Dorsolateral prefrontal cortex (tissue), 120 donors: ENCODE measurements at regions of chr20 and their contacts with region 1.

Region 1: GRCh38 chr20:33731693-33732165 is at the start of gene ZNF341:
- DNase-seq: peak; percentile 79 to 92 (median 87)
- H3K4me3 ChIP-seq: peak within 1 kb of the TSS; percentile 46 to 80 (median 68)
- H3K27ac ChIP-seq: peak within 1 kb of the TSS; percentile 92 to 99 (median 98)
- H3K27me3 ChIP-seq: no peaks in the 10 kb centered on the region
- CTCF ChIP-seq: peak; percentile 55 to 95 (median 81)
- total RNA-seq, gene ZNF341: 4.5 to 12.8 (median 7.9) TPM

Region 2: GRCh38 chr20:33443512-33444239 is 288.1 kb before region 1 on chr20 and contains the start of gene SNTA1:
- intact Hi-C with region 1: no loop called
- DNase-seq: peak; percentile 55 to 84 (median 78)
- H3K4me3 ChIP-seq: peak within 1 kb of the TSS; percentile 54 to 87 (median 75)
- H3K27ac ChIP-seq: peak within 1 kb of the TSS in 55 of 59 donors; percentile 3 to 92 (median 74)
- H3K27me3 ChIP-seq: no peaks in the 10 kb centered on the region
- CTCF ChIP-seq: peak in 2 of 56 donors; percentile 9 to 19
- total RNA-seq, gene SNTA1: 35.4 to 180 (median 77.4) TPM

Region 3: GRCh38 chr20:33666293-33667244 is 65.2 kb before region 1 on chr20 and contains the start of gene ACTL10:
- intact Hi-C with region 1: loop called (anchors 2 to 5 kb)
- DNase-seq: peak; percentile 66 to 95 (median 92)
- H3K4me3 ChIP-seq: peak within 1 kb of the TSS; percentile 45 to 81 (median 65)
- H3K27ac ChIP-seq: peak within 1 kb of the TSS; percentile 60 to 98 (median 89)
- H3K27me3 ChIP-seq: no peaks in the 10 kb centered on the region
- CTCF ChIP-seq: peak in 49 of 56 donors; percentile 1 to 68 (median 43)
- total RNA-seq, gene ACTL10: 0.20 to 1.3 (median 0.39) TPM in 83 of 120 experiments, not detected in the others

Region 4: DNA sequence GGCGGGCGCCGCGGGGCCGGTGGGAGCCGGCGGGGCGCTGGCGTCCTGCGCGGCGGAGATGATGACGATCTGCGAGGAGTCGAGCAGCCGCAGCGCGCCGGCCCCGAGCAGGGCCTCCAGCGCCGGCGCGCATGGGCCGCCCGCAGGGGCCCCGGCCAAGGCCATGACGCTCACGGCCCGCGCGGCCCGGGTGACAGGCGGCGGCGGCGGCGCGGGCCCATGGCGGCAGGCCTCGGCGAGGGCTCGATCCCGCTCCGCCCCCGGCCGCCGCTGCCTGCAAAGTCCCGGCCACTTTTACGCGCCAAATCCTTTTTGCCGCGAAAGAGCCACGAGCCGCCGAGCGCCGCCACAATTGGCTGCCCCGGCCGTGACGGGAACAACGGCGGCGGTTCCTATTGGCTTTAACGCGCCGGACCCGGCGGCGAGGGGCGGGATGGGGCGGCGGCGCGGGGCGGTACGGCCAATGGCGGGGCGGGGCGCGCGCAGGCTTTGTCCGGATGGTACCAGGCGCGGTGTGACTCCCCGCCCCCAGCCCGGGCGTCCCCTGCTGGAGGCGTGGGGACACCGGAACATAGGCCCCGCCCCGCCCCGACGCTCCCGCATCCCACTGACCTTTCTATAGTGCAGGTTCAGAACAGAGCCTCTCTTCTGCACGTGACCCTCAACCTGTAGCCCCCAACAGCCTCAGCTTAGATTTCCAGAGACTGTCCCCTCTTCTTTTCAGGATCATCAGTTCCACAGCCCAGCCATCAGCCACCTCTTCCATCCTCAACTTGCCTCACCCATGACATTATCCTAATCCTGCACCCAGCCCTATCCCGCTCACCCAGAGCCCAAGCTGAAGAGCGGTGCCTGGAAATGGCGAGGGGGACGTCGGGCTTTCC is 45.4 kb before region 1 on chr20 and contains the start of gene E2F1:
- intact Hi-C with region 1: loop called in 1 of 2 experiments (anchors 2 kb)
- DNase-seq: peak; percentile 91 to 97 (median 95)
- H3K4me3 ChIP-seq: peak within 1 kb of the TSS; percentile 26 to 68 (median 53)
- H3K27ac ChIP-seq: peak within 1 kb of the TSS; percentile 78 to 99 (median 94)
- H3K27me3 ChIP-seq: no peaks in the 10 kb centered on the region
- CTCF ChIP-seq: peak; percentile 8 to 81 (median 62)
- total RNA-seq, gene E2F1: 5.2 to 12.7 (median 8.2) TPM

Region 5: GRCh38 chr20:33719989-33720709 is 11.6 kb before region 1 on chr20 and contains the start of gene PXMP4:
- intact Hi-C with region 1: loop called in 1 of 2 experiments (anchors 1 kb)
- DNase-seq: peak; percentile 76 to 98 (median 94)
- H3K4me3 ChIP-seq: peak within 1 kb of the TSS; percentile 61 to 100 (median 94)
- H3K27ac ChIP-seq: peak within 1 kb of the TSS in 53 of 59 donors; percentile 17 to 92 (median 74)
- H3K27me3 ChIP-seq: no peaks in the 10 kb centered on the region
- CTCF ChIP-seq: peak in 27 of 56 donors; percentile 7 to 61 (median 23)
- total RNA-seq, gene PXMP4: 7.0 to 18.9 (median 12.7) TPM

Region 6: GRCh38 chr20:33859157-33859695 is 127.5 kb after region 1 on chr20:
- intact Hi-C with region 1: no loop called
- DNase-seq: no peak
- H3K4me3 ChIP-seq: no peak overlapping the region
- H3K27ac ChIP-seq: peak overlapping the region in 46 of 59 donors; percentile 7 to 85 (median 62)
- H3K27me3 ChIP-seq: no peaks in the 10 kb centered on the region
- CTCF ChIP-seq: no peak

Region 7: DNA sequence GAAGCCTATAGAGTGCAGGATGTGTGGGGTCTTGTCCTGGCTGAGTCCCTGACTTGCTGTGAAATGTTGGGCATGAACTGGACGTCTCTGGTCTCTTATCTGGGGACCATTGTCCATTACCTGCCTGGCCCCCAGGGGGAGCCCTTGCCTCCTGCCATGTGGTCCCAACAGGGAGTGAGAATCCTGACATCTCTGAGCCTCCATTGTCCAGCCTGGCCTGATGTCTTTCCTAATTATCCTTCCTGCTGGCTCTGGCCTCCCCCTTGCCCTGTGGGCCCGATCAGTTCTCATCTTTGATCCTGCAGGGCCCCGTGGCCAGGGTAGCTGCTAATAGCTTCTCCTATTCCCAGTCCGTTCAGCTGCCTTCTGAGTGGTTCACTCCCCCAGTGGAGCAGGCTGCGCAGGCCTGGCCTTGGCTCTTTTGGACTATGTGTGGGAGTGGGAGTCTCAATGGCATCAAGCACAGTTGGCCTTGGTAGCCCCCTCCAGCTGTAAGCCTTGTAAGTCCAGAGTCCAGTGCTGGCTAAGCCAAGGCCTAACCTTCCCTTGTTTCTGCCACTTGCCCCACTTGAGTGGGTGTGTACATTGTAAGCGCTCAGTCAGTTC is 184.1 kb after region 1 on chr20:
- intact Hi-C with region 1: no loop called
- DNase-seq: no peak
- H3K4me3 ChIP-seq: no peak overlapping the region
- H3K27ac ChIP-seq: no peak overlapping the region
- H3K27me3 ChIP-seq: no peaks in the 10 kb centered on the region
- CTCF ChIP-seq: peak in 46 of 56 donors; percentile 5 to 56 (median 34)

Region 8: DNA sequence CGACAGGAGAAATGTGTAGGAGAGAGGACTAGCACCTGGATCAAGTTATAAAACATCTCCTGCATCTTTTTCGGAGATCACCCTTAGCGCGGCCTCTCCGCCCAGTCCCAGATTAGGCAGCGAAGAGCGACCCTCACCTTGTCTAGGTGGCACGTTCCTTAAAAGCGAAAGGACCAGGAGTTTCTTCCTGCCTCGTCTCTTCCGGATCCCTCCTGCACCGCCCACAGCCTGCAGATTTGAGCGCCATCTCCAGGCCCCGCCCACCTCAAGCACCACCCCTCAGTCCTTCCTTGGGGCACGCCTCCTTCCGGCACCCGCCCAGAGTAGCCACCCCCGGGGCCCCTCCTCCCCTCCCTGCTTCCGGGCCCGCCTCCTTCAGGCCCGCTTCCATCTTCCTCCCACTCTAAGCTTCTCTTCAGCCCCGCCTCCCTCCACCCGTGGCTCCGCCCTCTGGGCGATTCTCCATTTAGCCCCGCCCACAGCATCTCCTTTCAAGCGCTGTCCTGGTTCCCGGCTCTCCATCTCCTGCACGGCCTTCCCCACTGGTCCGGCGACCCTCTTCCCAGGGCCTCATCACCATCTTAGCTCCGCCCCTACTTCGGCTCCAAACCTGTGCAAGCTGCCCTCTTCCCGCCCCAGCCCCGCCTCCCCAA is 261.3 kb after region 1 on chr20:
- intact Hi-C with region 1: loop called (anchors 5 to 10 kb)
- DNase-seq: peak; percentile 99 to 100 (median 99)
- H3K4me3 ChIP-seq: peak overlapping the region; percentile 77 to 99 (median 93)
- H3K27ac ChIP-seq: peak overlapping the region; percentile 88 to 100 (median 97)
- H3K27me3 ChIP-seq: no peaks in the 10 kb centered on the region
- CTCF ChIP-seq: peak in 33 of 56 donors; percentile 1 to 52 (median 29)

Region 9: GRCh38 chr20:34363062-34363464 is 631.3 kb after region 1 on chr20 and contains the start of gene ITCH:
- intact Hi-C with region 1: loop called in 1 of 2 experiments (anchors 5 kb)
- DNase-seq: peak; percentile 93 to 97 (median 96)
- H3K4me3 ChIP-seq: peak within 1 kb of the TSS; percentile 61 to 99 (median 92)
- H3K27ac ChIP-seq: peak within 1 kb of the TSS; percentile 72 to 98 (median 94)
- H3K27me3 ChIP-seq: no peaks in the 10 kb centered on the region
- CTCF ChIP-seq: peak in 33 of 56 donors; percentile 6 to 57 (median 26)
- total RNA-seq, gene ITCH: 60.3 to 137 (median 86.3) TPM